Activated CD8-positive, alpha-beta T cell treated with anti-CD3 and anti-CD28 coated beads for 36 hours (primary cell): ENCODE measurements at regions of chr14 and their contacts with region 1.

Region 1: GRCh38 chr14:22570132-22570949 is 18.7 kb downstream of the DAD1 start:
- DNase-seq: peak; percentile 91
- ATAC-seq: peak; percentile 81
- H3K4me3 Mint-ChIP-seq: peak overlapping the region; percentile 86
- H3K27ac Mint-ChIP-seq: peak overlapping the region; percentile 94
- H3K4me1 Mint-ChIP-seq: peaks cover 60% of the 10 kb centered on the region
- H3K27me3 Mint-ChIP-seq: no peaks in the 10 kb centered on the region
- CTCF ChIP-seq: peak; percentile 91

Region 2: GRCh38 chr14:22122227-22122818 is 448.0 kb before region 1 on chr14:
- CTCF ChIA-PET with region 1: interaction called, 18 read pairs
- POLR2A ChIA-PET with region 1: no interaction called
- intact Hi-C with region 1: no loop called
- DNase-seq: peak; percentile 30
- ATAC-seq: peak; percentile 7
- H3K4me3 Mint-ChIP-seq: peak overlapping the region; percentile 80
- H3K27ac Mint-ChIP-seq: peak overlapping the region; percentile 92
- H3K4me1 Mint-ChIP-seq: peaks cover 10% of the 10 kb centered on the region
- H3K27me3 Mint-ChIP-seq: no peaks in the 10 kb centered on the region
- CTCF ChIP-seq: peak; percentile 13

Region 3: GRCh38 chr14:22519877-22520685 is 50.3 kb before region 1 on chr14:
- CTCF ChIA-PET with region 1: interaction called, 18 read pairs
- POLR2A ChIA-PET with region 1: interaction called, 200 read pairs
- intact Hi-C with region 1: no loop called
- DNase-seq: no peak
- ATAC-seq: peak; percentile 14
- H3K4me3 Mint-ChIP-seq: peak overlapping the region; percentile 79
- H3K27ac Mint-ChIP-seq: peak overlapping the region; percentile 96
- H3K4me1 Mint-ChIP-seq: peaks cover 68% of the 10 kb centered on the region
- H3K27me3 Mint-ChIP-seq: no peaks in the 10 kb centered on the region
- CTCF ChIP-seq: no peak

Region 4: DNA sequence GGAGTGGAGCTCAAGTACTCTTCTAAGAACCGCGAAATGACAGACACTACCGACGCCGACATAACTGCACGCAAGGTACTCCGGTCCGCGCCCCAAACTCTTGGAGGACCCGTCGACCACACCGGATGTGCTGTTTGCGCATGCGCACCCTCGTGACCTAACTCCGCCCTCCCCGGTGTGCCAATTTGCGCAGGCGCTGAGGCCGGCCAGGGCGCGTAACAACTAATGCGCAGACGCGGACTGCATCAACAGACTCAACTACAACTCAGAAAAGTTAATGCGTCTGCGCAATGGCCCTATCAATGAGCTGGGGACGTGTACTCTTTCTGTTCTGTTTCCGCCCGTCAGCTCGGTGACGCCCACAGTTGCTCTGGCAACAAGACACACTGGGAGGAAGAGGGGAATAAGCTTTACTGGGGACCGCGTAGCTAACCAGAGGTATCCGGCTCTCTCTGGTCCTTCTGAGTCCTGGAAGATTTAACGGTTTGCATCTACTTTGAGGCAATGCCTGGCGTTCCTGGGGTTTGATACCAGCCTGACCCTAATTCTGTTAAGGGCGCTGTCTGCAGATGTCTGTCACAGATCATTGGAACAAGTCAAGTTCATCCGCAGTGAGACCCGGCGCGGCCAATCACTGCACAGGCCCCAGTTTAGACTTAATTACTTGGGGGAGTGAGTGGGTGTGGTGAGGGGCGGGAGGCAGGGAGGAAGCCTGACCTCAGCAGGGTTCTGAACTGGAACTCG is 18.9 kb after region 1 on chr14 and contains the start of gene DAD1:
- CTCF ChIA-PET with region 1: interaction called, 163 read pairs
- POLR2A ChIA-PET with region 1: interaction called, 31 read pairs
- intact Hi-C with region 1: no loop called
- DNase-seq: peak; percentile 99
- ATAC-seq: peak; percentile 91
- H3K4me3 Mint-ChIP-seq: peak within 1 kb of the TSS; percentile 83
- H3K27ac Mint-ChIP-seq: peak within 1 kb of the TSS; percentile 98
- H3K4me1 Mint-ChIP-seq: peaks cover 57% of the 10 kb centered on the region
- H3K27me3 Mint-ChIP-seq: peaks cover 1% of the 10 kb centered on the region
- CTCF ChIP-seq: peak; percentile 39
- total RNA-seq, gene DAD1: 194 to 196 TPM

Region 5: DNA sequence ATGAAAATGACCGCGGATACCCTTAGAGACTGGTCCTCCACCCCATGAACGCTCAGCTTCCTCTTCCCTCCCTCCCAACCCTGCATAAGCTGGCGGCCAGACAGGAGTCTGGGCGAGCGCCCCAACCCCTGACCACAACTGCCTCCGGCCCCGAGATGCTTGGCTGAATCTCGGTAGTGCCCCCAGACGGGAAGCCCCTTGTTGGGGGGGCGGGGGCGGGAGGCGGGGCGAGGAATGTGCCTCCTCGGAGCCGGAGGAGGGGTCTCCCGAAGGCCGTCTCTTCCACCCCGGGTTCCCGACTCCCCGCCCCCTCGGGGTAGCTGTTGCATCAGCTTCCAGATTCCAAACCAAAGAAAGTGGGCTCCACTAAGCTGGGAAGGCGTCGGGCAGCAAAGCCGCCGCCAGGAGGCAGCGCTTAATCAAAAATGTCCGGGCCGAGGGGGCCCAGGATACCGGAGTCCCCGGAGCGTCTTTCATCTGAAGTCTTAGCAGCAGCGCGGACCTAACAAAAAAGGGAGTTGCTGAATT is 252.3 kb after region 1 on chr14:
- CTCF ChIA-PET with region 1: interaction called, 30 read pairs
- POLR2A ChIA-PET with region 1: no interaction called
- intact Hi-C with region 1: loop called (anchors 10 kb)
- DNase-seq: peak; percentile 78
- ATAC-seq: peak; percentile 83
- H3K4me3 Mint-ChIP-seq: peak overlapping the region; percentile 59
- H3K27ac Mint-ChIP-seq: no peak overlapping the region
- H3K4me1 Mint-ChIP-seq: peaks cover 27% of the 10 kb centered on the region
- H3K27me3 Mint-ChIP-seq: peaks cover 13% of the 10 kb centered on the region
- CTCF ChIP-seq: peak; percentile 95

Region 6: DNA sequence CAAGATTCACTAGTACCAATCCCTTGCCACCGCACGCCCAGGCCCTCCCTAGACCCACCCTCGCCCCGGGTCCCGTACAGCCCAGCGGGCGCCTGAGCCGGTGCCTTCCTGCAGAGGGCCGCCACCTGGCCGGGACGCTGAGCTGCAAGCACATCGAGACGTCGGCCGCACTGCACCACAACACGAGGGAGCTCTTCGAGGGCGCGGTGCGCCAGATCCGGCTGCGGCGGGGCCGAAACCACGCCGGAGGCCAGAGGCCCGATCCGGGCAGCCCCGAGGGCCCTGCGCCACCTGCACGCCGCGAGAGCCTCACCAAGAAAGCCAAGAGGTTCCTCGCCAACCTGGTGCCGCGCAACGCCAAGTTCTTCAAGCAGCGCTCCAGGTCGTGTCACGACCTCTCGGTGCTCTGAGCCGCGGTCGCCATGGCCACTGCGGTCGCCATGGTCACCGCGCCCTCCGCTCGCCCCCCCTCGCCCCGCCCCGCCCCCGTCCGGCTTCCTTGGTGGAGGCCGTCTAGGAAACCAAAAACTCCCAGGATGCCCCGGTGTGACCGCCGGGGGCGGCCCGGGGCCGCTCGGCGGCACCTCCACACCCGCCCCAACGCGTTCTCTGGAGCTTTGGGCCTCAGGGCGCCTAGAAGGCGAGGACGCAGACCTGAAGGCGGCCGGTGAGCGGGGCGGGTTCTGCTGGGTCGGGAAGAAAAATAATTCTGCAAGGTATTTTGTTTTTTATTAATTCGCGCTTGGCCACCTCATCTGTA is 316.3 kb after region 1 on chr14:
- CTCF ChIA-PET with region 1: interaction called, 10 read pairs
- POLR2A ChIA-PET with region 1: no interaction called
- intact Hi-C with region 1: no loop called
- DNase-seq: peak; percentile 81
- ATAC-seq: peak; percentile 71
- H3K4me3 Mint-ChIP-seq: peak overlapping the region; percentile 70
- H3K27ac Mint-ChIP-seq: peak overlapping the region; percentile 77
- H3K4me1 Mint-ChIP-seq: peaks cover 38% of the 10 kb centered on the region
- H3K27me3 Mint-ChIP-seq: peaks cover 1% of the 10 kb centered on the region
- CTCF ChIP-seq: peak; percentile 35